CD4-positive, alpha-beta memory T cell (primary cell): ENCODE measurements at regions of chr13 and their contacts with region 1.

Region 1: GRCh38 chr13:46184277-46184699 is 2.3 kb upstream of the LCP1 start:
- DNase-seq: peak; percentile 77 to 81 (median 80)
- H3K4me3 ChIP-seq: peak overlapping the region in 1 of 2 donors; percentile 21
- H3K4me3 Mint-ChIP-seq: peak overlapping the region; percentile 67 to 98 (median 98)
- H3K27ac ChIP-seq: peak overlapping the region; percentile 89
- H3K27ac Mint-ChIP-seq: peak overlapping the region; percentile 90 to 99 (median 96)
- H3K4me1 ChIP-seq: peaks cover 36% of the 10 kb centered on the region
- H3K4me1 Mint-ChIP-seq: peaks cover 34 to 50% (median 39%) of the 10 kb centered on the region in 4 donors
- H3K27me3 ChIP-seq: no peaks in the 10 kb centered on the region
- H3K27me3 Mint-ChIP-seq: no peaks in the 10 kb centered on the region

Region 2: GRCh38 chr13:44425041-44425814 is 1759.1 kb before region 1 on chr13:
- CTCF ChIA-PET with region 1: no interaction called
- POLR2A ChIA-PET with region 1: no interaction called
- intact Hi-C with region 1: no loop called
- DNase-seq: no peak
- H3K4me3 ChIP-seq: no peak overlapping the region
- H3K4me3 Mint-ChIP-seq: no peak overlapping the region
- H3K27ac ChIP-seq: no peak overlapping the region
- H3K27ac Mint-ChIP-seq: no peak overlapping the region
- H3K4me1 ChIP-seq: no peaks in the 10 kb centered on the region
- H3K4me1 Mint-ChIP-seq: no peaks in the 10 kb centered on the region
- H3K27me3 ChIP-seq: no peaks in the 10 kb centered on the region
- H3K27me3 Mint-ChIP-seq: peaks cover 11 to 32% of the 10 kb centered on the region in 2 donors

Region 3: GRCh38 chr13:46126552-46127357 is 57.5 kb before region 1 on chr13:
- CTCF ChIA-PET with region 1: interaction called, 6 read pairs
- POLR2A ChIA-PET with region 1: interaction called, 3 read pairs
- intact Hi-C with region 1: loop called (anchors 2 kb)
- DNase-seq: peak; percentile 58 to 72 (median 65)
- H3K4me3 ChIP-seq: no peak overlapping the region
- H3K4me3 Mint-ChIP-seq: peak overlapping the region in 1 of 8 donors; percentile 28
- H3K27ac ChIP-seq: no peak overlapping the region
- H3K27ac Mint-ChIP-seq: peak overlapping the region; percentile 62 to 94 (median 83)
- H3K4me1 ChIP-seq: peaks cover 44% of the 10 kb centered on the region
- H3K4me1 Mint-ChIP-seq: peaks cover 32 to 53% (median 44%) of the 10 kb centered on the region in 4 donors
- H3K27me3 ChIP-seq: no peaks in the 10 kb centered on the region
- H3K27me3 Mint-ChIP-seq: no peaks in the 10 kb centered on the region

Region 4: DNA sequence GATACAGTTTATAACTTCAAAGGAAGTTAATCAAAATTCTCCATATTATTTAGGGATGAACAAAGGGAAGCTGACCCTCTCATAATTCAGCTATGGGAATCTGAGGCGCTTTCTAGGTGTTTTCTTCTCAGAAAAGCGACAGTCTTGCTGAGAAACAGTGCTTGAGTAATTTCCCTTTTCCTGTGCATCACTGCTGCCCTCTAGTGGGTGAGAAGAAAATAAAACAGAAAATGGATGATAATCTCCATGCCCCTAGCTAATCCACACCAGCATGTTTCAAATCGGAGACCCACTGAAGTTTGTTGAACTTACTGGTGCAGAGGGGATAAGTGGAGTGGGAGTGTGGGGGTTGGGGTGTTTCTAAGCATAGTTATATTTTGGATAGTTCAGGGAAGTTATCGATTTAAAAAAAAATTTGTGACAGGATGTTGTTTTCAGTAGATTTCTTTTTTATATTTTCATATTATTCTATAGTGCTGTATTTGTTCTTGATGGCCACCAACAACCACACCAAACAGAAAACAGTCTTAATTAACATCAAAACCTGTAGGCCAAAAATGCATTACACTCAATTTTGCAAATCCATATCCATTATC is 23.7 kb before region 1 on chr13:
- CTCF ChIA-PET with region 1: interaction called, 27 read pairs
- POLR2A ChIA-PET with region 1: interaction called, 288 read pairs
- intact Hi-C with region 1: loop called (anchors 1 kb)
- DNase-seq: peak; percentile 54 to 77 (median 73)
- H3K4me3 ChIP-seq: peak overlapping the region; percentile 2 to 23
- H3K4me3 Mint-ChIP-seq: peak overlapping the region; percentile 12 to 87 (median 82)
- H3K27ac ChIP-seq: peak overlapping the region; percentile 73
- H3K27ac Mint-ChIP-seq: peak overlapping the region; percentile 84 to 96 (median 94)
- H3K4me1 ChIP-seq: peaks cover 54% of the 10 kb centered on the region
- H3K4me1 Mint-ChIP-seq: peaks cover 44 to 59% (median 51%) of the 10 kb centered on the region in 4 donors
- H3K27me3 ChIP-seq: no peaks in the 10 kb centered on the region
- H3K27me3 Mint-ChIP-seq: no peaks in the 10 kb centered on the region

Region 5: GRCh38 chr13:46202188-46202795 is 18.0 kb after region 1 on chr13:
- CTCF ChIA-PET with region 1: interaction called, 11 read pairs
- POLR2A ChIA-PET with region 1: interaction called, 10 read pairs
- intact Hi-C with region 1: no loop called
- DNase-seq: peak in 3 of 5 donors; percentile 35 to 50 (median 40)
- H3K4me3 ChIP-seq: no peak overlapping the region
- H3K4me3 Mint-ChIP-seq: peak overlapping the region in 6 of 8 donors; percentile 37 to 76 (median 58)
- H3K27ac ChIP-seq: no peak overlapping the region
- H3K27ac Mint-ChIP-seq: peak overlapping the region; percentile 73 to 93 (median 90)
- H3K4me1 ChIP-seq: peaks cover 32% of the 10 kb centered on the region
- H3K4me1 Mint-ChIP-seq: peaks cover 31 to 60% (median 41%) of the 10 kb centered on the region in 4 donors
- H3K27me3 ChIP-seq: no peaks in the 10 kb centered on the region
- H3K27me3 Mint-ChIP-seq: no peaks in the 10 kb centered on the region

Region 6: DNA sequence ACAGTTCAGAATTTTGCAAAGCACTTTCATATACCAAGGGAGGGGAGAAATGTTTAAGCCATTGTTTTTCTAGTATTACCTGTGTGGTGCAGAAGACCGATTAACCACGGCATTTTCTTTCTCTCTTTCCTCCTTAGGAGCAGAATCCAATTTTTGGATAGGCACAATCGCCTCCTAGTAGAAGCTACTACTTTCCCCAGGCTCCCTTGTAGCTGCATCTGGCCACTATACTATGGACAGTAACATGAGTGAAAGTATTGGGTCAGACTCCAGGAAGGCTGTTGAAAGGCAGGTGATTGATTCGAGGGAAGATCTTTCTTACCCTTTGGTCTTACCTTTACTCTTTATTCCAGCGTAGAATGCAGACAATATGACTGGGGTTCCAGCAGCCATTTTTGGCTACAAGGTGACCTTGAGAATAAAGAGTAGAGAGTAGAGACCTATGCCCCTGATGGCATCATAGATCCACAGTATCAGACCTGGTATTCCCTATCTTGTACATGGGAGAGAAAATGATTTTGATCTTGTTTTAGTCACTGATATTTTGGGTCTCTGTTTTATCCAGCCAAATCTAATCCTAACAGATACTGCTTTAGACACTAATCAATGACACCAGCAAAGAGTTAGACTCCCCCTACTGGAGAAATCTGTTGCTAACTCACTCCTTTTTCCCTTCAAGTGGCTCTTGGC is 104.4 kb after region 1 on chr13:
- CTCF ChIA-PET with region 1: interaction called, 5 read pairs
- POLR2A ChIA-PET with region 1: no interaction called
- intact Hi-C with region 1: loop called (anchors 1 kb)
- DNase-seq: peak in 4 of 5 donors; percentile 67 to 71 (median 69)
- H3K4me3 ChIP-seq: no peak overlapping the region
- H3K4me3 Mint-ChIP-seq: no peak overlapping the region
- H3K27ac ChIP-seq: no peak overlapping the region
- H3K27ac Mint-ChIP-seq: peak overlapping the region in 3 of 7 donors; percentile 26 to 53 (median 42)
- H3K4me1 ChIP-seq: peaks cover 7% of the 10 kb centered on the region
- H3K4me1 Mint-ChIP-seq: peaks cover 3 to 22% (median 8%) of the 10 kb centered on the region in 4 donors
- H3K27me3 ChIP-seq: no peaks in the 10 kb centered on the region
- H3K27me3 Mint-ChIP-seq: no peaks in the 10 kb centered on the region